T-cell (primary cell): ENCODE measurements at regions of chr19 and their contacts with region 1.

Region 1: DNA sequence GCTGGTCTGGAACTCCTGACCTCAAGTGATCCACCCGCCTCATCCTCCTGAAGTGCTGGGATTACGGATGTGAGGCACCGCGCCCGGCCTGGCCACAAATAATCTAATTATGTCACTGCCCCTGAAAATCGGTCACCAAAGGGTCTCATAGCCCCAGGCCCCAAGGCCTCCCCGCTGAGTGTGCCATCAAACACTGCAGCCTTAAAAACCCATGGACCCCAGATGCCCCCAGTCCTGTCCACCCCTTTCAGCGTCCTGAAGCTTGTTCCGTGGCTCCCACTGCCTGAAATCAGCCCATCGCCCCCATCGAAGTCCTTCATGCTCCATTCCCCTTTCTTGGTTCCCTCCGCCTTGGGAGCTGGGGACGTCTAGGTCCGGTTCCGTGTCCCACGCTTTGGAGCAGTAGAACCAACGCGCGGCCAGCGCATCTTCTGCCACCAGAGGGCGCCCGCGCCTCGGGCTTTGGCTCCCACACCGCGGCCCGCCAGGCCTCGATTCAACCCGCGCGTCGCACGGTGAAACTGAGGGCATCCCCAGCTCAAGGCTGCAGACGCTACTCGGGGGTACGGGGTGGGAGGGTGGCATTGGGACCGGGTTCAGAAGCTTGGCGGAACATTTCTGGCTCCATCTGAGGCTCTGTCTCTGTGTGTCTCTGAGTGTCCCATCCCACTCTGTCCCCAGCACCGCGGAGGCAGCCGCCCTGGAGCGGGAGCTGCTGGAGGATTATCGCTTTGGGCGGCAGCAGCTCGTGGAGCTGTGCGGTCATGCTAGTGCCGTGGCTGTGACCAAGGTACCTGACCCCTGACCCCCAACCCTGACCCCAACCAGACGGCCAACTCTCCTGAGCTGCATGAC is 3.5 kb downstream of the YJEFN3 start:
- DNase-seq: peak; percentile 52 to 92 (median 81)
- ATAC-seq: peak; percentile 83 to 87 (median 86)
- H3K4me3 ChIP-seq: no peak overlapping the region
- H3K4me3 Mint-ChIP-seq: no peak overlapping the region
- H3K27ac ChIP-seq: no peak overlapping the region
- H3K27ac Mint-ChIP-seq: peak overlapping the region; percentile 71 to 84
- H3K4me1 ChIP-seq: peaks cover 0 to 15% of the 10 kb centered on the region in 2 experiments
- H3K4me1 Mint-ChIP-seq: peaks cover 9 to 25% (median 12%) of the 10 kb centered on the region in 3 donors
- H3K27me3 ChIP-seq: no peaks in the 10 kb centered on the region
- H3K27me3 Mint-ChIP-seq: peaks cover 0 to 2% of the 10 kb centered on the region in 2 donors

Region 2: DNA sequence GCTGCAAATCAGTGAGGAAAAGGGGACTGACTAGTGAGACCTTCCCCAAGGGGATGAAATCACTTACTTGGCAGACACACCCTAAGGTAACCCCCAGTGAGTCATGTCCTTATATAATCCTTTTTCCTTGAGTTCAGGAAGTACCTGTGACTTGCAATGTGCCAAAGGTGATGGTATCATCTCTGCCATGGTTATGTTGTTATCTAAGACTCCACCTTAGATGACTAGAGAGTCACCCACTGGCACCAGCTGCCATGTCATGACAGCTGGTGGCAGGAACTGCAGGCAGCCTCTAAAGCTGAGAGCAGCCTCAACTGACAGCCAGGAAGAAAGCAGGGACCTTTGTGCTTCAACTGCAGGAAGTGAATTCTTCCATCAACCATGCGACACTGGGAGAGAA is 73.8 kb after region 1 on chr19:
- CTCF ChIA-PET with region 1: interaction called in 1 of 2 experiments, 10 read pairs
- POLR2A ChIA-PET with region 1: no interaction called
- DNase-seq: peak in 34 of 35 experiments; percentile 25 to 77 (median 53)
- ATAC-seq: peak; percentile 85 to 90 (median 89)
- H3K4me3 ChIP-seq: no peak overlapping the region
- H3K4me3 Mint-ChIP-seq: peak overlapping the region; percentile 47 to 57 (median 55)
- H3K27ac ChIP-seq: peak overlapping the region; percentile 85
- H3K27ac Mint-ChIP-seq: peak overlapping the region; percentile 96 to 97
- H3K4me1 ChIP-seq: peaks cover 36 to 58% of the 10 kb centered on the region in 2 experiments
- H3K4me1 Mint-ChIP-seq: peaks cover 57 to 69% (median 66%) of the 10 kb centered on the region in 3 donors
- H3K27me3 ChIP-seq: no peaks in the 10 kb centered on the region
- H3K27me3 Mint-ChIP-seq: no peaks in the 10 kb centered on the region

Region 3: DNA sequence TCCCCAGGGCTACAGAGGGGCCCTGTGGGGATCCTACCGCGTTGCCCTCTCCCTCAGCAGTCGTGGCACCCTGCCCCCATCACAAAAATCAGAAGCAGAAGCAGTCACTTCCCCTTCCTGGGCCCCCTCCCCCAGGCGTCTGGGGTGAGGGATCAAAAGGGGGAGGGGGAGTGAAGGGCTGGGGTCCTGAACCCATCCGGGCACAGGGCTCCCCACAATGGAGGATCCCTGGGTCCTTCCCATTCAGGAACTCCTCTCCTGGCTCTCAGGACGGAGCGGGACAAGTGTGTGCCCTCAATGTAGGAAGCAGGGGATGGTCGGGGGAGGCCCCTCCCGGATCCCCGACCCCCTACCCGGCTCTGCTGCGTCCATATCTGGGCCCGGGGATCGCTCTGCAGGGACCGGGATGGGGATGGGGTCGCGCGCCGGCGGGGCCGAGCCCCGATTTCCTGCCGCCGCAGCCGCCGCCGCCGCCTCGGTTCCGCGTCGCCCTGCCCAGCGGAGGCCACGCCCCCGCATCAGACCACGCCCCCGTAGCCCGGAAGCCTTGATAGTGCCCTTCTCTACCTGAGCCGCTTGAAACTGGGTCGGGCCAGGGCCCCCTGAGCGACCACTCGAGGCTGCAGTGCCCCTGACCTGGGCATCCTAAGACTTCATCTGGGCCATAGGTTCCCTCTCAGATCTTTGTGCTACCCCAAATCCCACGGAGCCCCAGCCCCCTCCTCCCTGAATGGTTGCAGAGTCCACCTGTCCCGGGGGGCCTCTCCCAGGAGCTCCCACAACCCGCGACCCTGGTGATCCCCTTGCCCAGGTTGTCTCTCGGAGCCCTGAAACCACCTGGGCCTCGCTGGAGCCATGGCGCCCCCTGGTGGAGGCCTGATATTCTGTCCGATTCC is 111.2 kb after region 1 on chr19 and contains the start of gene GMIP:
- CTCF ChIA-PET with region 1: interaction called, 8 to 10 read pairs
- POLR2A ChIA-PET with region 1: no interaction called
- DNase-seq: peak; percentile 72 to 94 (median 85)
- ATAC-seq: peak; percentile 88 to 92 (median 90)
- H3K4me3 ChIP-seq: peak within 1 kb of the TSS; percentile 96 to 100
- H3K4me3 Mint-ChIP-seq: peak within 1 kb of the TSS; percentile 92 to 93 (median 92)
- H3K27ac ChIP-seq: peak within 1 kb of the TSS; percentile 89
- H3K27ac Mint-ChIP-seq: peak within 1 kb of the TSS; percentile 95 to 98
- H3K4me1 ChIP-seq: peaks cover 0 to 40% of the 10 kb centered on the region in 2 experiments
- H3K4me1 Mint-ChIP-seq: peaks cover 23 to 26% (median 23%) of the 10 kb centered on the region in 3 donors
- H3K27me3 ChIP-seq: no peaks in the 10 kb centered on the region
- H3K27me3 Mint-ChIP-seq: no peaks in the 10 kb centered on the region
- total RNA-seq, gene GMIP: 99.5 to 148 (median 133) TPM

Region 4: GRCh38 chr19:19758164-19758563 is 226.0 kb after region 1 on chr19:
- CTCF ChIA-PET with region 1: no interaction called
- POLR2A ChIA-PET with region 1: interaction called in 1 of 2 experiments, 10 read pairs
- DNase-seq: no peak
- ATAC-seq: no peak
- H3K4me3 ChIP-seq: no peak overlapping the region
- H3K4me3 Mint-ChIP-seq: no peak overlapping the region
- H3K27ac ChIP-seq: no peak overlapping the region
- H3K27ac Mint-ChIP-seq: no peak overlapping the region
- H3K4me1 ChIP-seq: no peaks in the 10 kb centered on the region
- H3K4me1 Mint-ChIP-seq: no peaks in the 10 kb centered on the region
- H3K27me3 ChIP-seq: no peaks in the 10 kb centered on the region
- H3K27me3 Mint-ChIP-seq: no peaks in the 10 kb centered on the region